IMR-90 (cell line): ENCODE measurements at regions of chr17 and their contacts with region 1.

Region 1: DNA sequence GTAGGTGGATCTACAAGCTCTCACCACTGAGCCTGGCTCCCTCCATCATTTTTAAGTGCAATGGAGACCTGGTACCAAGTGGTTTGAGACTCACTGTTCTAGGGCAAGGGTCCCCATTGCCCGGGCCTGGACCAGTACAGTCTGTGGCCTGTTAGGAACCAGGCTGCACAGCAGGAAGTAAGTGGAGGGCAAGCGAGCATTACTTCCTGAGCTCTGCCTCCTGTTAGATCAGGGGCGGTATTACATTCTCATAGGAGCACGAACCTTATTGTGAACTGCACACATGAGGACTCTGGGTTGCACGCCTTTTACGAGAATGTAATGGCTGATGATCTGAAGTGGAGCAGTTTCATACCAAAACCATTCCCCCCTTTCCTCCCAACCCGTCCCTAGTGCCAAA is 6.8 kb upstream of the ZNF594 start:
- DNase-seq: no peak
- ATAC-seq: no peak
- H3K4me3 ChIP-seq: no peak overlapping the region
- H3K27ac ChIP-seq: no peak overlapping the region
- H3K4me1 ChIP-seq: peaks cover 3% of the 10 kb centered on the region; the same call in 1 of the 2 replicates
- H3K27me3 ChIP-seq: no peaks in the 10 kb centered on the region
- CTCF ChIP-seq: no peak
- POLR2A ChIP-seq: no peak
- RAD21 ChIP-seq: no peak

Region 2: GRCh38 chr17:5080591-5080990 is 117.9 kb before region 1 on chr17:
- CTCF ChIA-PET with region 1: no interaction called
- POLR2A ChIA-PET with region 1: no interaction called
- dilution Hi-C with region 1: no loop called
- in situ Hi-C with region 1: no loop called
- intact Hi-C with region 1: no loop called
- DNase-seq: no peak
- ATAC-seq: no peak
- H3K4me3 ChIP-seq: no peak overlapping the region
- H3K27ac ChIP-seq: no peak overlapping the region
- H3K4me1 ChIP-seq: no peaks in the 10 kb centered on the region
- H3K27me3 ChIP-seq: no peaks in the 10 kb centered on the region
- CTCF ChIP-seq: no peak
- POLR2A ChIP-seq: no peak
- RAD21 ChIP-seq: no peak

Region 3: DNA sequence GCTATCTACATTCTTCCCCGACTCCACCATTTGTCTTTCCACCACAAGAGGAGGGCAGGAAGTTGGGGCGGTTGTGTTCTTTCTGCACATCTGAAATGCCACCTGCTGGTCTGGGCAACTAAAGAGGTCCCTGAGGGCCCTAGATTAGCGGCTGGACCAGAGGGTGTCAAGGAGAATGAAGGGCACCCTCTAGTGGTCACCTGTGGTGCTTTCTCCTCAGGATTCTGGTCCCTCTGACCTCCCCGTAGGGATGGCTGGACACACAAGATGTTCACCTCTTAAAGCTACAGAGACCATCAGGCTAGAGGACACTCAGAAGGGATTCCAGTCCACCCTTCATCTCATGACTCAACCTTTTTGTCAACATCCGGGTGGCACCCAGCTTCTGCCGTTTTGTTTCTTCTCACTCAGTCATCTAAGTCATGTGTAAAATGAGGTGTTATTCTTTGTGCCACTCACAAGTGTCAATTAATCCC is 39.1 kb after region 1 on chr17:
- CTCF ChIA-PET with region 1: interaction called, 4 read pairs
- POLR2A ChIA-PET with region 1: no interaction called
- dilution Hi-C with region 1: no loop called
- in situ Hi-C with region 1: no loop called
- intact Hi-C with region 1: loop called (anchors 1 kb)
- DNase-seq: peak; percentile 50
- ATAC-seq: peak; percentile 82
- H3K4me3 ChIP-seq: no peak overlapping the region
- H3K27ac ChIP-seq: no peak overlapping the region
- H3K4me1 ChIP-seq: no peaks in the 10 kb centered on the region
- H3K27me3 ChIP-seq: peaks cover 2% of the 10 kb centered on the region; the same call in 1 of the 2 replicates
- CTCF ChIP-seq: peak; percentile 59
- POLR2A ChIP-seq: no peak
- RAD21 ChIP-seq: peak; percentile 41

Region 4: GRCh38 chr17:5286796-5287195 is 88.3 kb after region 1 on chr17:
- CTCF ChIA-PET with region 1: no interaction called
- POLR2A ChIA-PET with region 1: no interaction called
- dilution Hi-C with region 1: no loop called
- in situ Hi-C with region 1: no loop called
- intact Hi-C with region 1: no loop called
- DNase-seq: no peak
- ATAC-seq: no peak
- H3K4me3 ChIP-seq: no peak overlapping the region
- H3K27ac ChIP-seq: no peak overlapping the region
- H3K4me1 ChIP-seq: peaks cover 6% of the 10 kb centered on the region
- H3K27me3 ChIP-seq: no peaks in the 10 kb centered on the region
- CTCF ChIP-seq: no peak
- POLR2A ChIP-seq: no peak
- RAD21 ChIP-seq: no peak

Region 5: GRCh38 chr17:5683241-5683640 is 484.8 kb after region 1 on chr17:
- CTCF ChIA-PET with region 1: no interaction called
- POLR2A ChIA-PET with region 1: no interaction called
- dilution Hi-C with region 1: no loop called
- in situ Hi-C with region 1: no loop called
- intact Hi-C with region 1: no loop called
- DNase-seq: no peak
- ATAC-seq: no peak
- H3K4me3 ChIP-seq: no peak overlapping the region
- H3K27ac ChIP-seq: no peak overlapping the region
- H3K4me1 ChIP-seq: no peaks in the 10 kb centered on the region
- H3K27me3 ChIP-seq: no peaks in the 10 kb centered on the region
- CTCF ChIP-seq: no peak
- POLR2A ChIP-seq: no peak
- RAD21 ChIP-seq: no peak